Naive thymus-derived CD4-positive, alpha-beta T cell (primary cell): ENCODE measurements at regions of chr6 and their contacts with region 1.

Region 1: GRCh38 chr6:132669690-132670291 is 10.8 kb upstream of the TAAR1 start:
- DNase-seq: peak in 6 of 9 donors; percentile 4 to 41 (median 32)
- ATAC-seq: peak; percentile 79
- H3K4me3 ChIP-seq: no peak overlapping the region
- H3K4me3 Mint-ChIP-seq: no peak overlapping the region
- H3K27ac ChIP-seq: no peak overlapping the region
- H3K27ac Mint-ChIP-seq: no peak overlapping the region
- H3K4me1 ChIP-seq: no peaks in the 10 kb centered on the region
- H3K4me1 Mint-ChIP-seq: peaks cover 0 to 6% (median 4%) of the 10 kb centered on the region in 7 donors
- H3K27me3 ChIP-seq: no peaks in the 10 kb centered on the region
- H3K27me3 Mint-ChIP-seq: peaks cover 3 to 17% (median 9%) of the 10 kb centered on the region in 5 donors

Region 2: GRCh38 chr6:132643547-132643946 is 26.2 kb before region 1 on chr6:
- CTCF ChIA-PET with region 1: no interaction called
- POLR2A ChIA-PET with region 1: no interaction called
- intact Hi-C with region 1: no loop called
- DNase-seq: no peak
- ATAC-seq: no peak
- H3K4me3 ChIP-seq: no peak overlapping the region
- H3K4me3 Mint-ChIP-seq: no peak overlapping the region
- H3K27ac ChIP-seq: no peak overlapping the region
- H3K27ac Mint-ChIP-seq: no peak overlapping the region
- H3K4me1 ChIP-seq: peaks cover 0 to 4% of the 10 kb centered on the region in 2 donors
- H3K4me1 Mint-ChIP-seq: peaks cover 0 to 4% (median 0%) of the 10 kb centered on the region in 7 donors
- H3K27me3 ChIP-seq: no peaks in the 10 kb centered on the region
- H3K27me3 Mint-ChIP-seq: peaks cover 0 to 31% (median 10%) of the 10 kb centered on the region in 5 donors

Region 3: GRCh38 chr6:132780770-132781371 is 111.1 kb after region 1 on chr6:
- CTCF ChIA-PET with region 1: interaction called, 4 read pairs
- POLR2A ChIA-PET with region 1: interaction called, 4 read pairs
- intact Hi-C with region 1: loop called (anchors 1 kb)
- DNase-seq: no peak
- ATAC-seq: no peak
- H3K4me3 ChIP-seq: no peak overlapping the region
- H3K4me3 Mint-ChIP-seq: no peak overlapping the region
- H3K27ac ChIP-seq: no peak overlapping the region
- H3K27ac Mint-ChIP-seq: no peak overlapping the region
- H3K4me1 ChIP-seq: no peaks in the 10 kb centered on the region
- H3K4me1 Mint-ChIP-seq: no peaks in the 10 kb centered on the region
- H3K27me3 ChIP-seq: no peaks in the 10 kb centered on the region
- H3K27me3 Mint-ChIP-seq: no peaks in the 10 kb centered on the region

Region 4: DNA sequence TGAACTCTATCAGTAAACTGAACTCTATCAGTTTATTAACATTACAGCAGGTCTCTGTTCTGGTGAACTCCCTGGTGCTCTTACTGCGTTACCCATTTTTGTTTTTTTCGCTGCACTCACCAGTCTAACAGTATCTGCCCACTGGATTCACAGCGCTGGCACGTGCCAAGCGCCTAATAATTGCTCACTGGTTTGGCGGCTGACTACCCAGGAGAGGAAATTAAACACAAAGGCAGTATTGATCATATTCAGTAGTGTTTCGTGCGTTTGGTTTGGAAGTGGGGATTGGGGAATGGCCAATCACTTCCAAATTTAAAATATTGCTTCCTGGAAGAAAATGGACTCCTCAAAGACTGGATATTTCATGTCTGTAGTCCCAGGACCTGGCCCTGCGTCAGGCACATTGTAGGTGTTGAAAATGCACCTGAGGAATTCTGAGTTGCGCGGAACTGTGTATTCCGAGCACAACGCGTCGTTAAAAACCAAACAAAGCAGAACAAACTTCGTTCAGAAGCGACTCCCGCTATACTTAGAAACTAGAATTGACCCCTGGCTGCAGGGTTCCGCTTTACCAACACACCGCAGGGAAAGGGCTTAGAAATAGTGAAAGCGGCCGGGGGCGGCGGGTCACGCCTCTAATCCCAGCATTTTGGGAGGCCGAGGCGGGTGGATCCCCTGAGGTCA is 143.5 kb after region 1 on chr6:
- CTCF ChIA-PET with region 1: interaction called, 3 read pairs
- POLR2A ChIA-PET with region 1: interaction called, 3 read pairs
- intact Hi-C with region 1: loop called in 1 of 2 experiments (anchors 5 kb)
- DNase-seq: peak in 8 of 9 donors; percentile 31 to 71 (median 62)
- ATAC-seq: no peak
- H3K4me3 ChIP-seq: peak overlapping the region; percentile 90
- H3K4me3 Mint-ChIP-seq: peak overlapping the region; percentile 91 to 100 (median 98)
- H3K27ac ChIP-seq: peak overlapping the region; percentile 80
- H3K27ac Mint-ChIP-seq: peak overlapping the region; percentile 95 to 100 (median 98)
- H3K4me1 ChIP-seq: peaks cover 23 to 26% of the 10 kb centered on the region in 2 donors
- H3K4me1 Mint-ChIP-seq: peaks cover 29 to 54% (median 43%) of the 10 kb centered on the region in 7 donors
- H3K27me3 ChIP-seq: no peaks in the 10 kb centered on the region
- H3K27me3 Mint-ChIP-seq: peaks cover 0 to 30% (median 0%) of the 10 kb centered on the region in 5 donors

Region 5: GRCh38 chr6:132962936-132963868 is 293.4 kb after region 1 on chr6:
- CTCF ChIA-PET with region 1: no interaction called
- POLR2A ChIA-PET with region 1: no interaction called
- intact Hi-C with region 1: loop called (anchors 1 to 5 kb)
- DNase-seq: peak in 7 of 9 donors; percentile 6 to 64 (median 20)
- ATAC-seq: peak; percentile 65
- H3K4me3 ChIP-seq: no peak overlapping the region
- H3K4me3 Mint-ChIP-seq: no peak overlapping the region
- H3K27ac ChIP-seq: no peak overlapping the region
- H3K27ac Mint-ChIP-seq: no peak overlapping the region
- H3K4me1 ChIP-seq: no peaks in the 10 kb centered on the region
- H3K4me1 Mint-ChIP-seq: peaks cover 0 to 29% (median 0%) of the 10 kb centered on the region in 7 donors
- H3K27me3 ChIP-seq: no peaks in the 10 kb centered on the region
- H3K27me3 Mint-ChIP-seq: peaks cover 20 to 49% (median 36%) of the 10 kb centered on the region in 5 donors

Region 6: GRCh38 chr6:133227344-133227743 is 557.6 kb after region 1 on chr6:
- CTCF ChIA-PET with region 1: no interaction called
- POLR2A ChIA-PET with region 1: no interaction called
- intact Hi-C with region 1: no loop called
- DNase-seq: no peak
- ATAC-seq: no peak
- H3K4me3 ChIP-seq: no peak overlapping the region
- H3K4me3 Mint-ChIP-seq: no peak overlapping the region
- H3K27ac ChIP-seq: no peak overlapping the region
- H3K27ac Mint-ChIP-seq: no peak overlapping the region
- H3K4me1 ChIP-seq: no peaks in the 10 kb centered on the region
- H3K4me1 Mint-ChIP-seq: no peaks in the 10 kb centered on the region
- H3K27me3 ChIP-seq: no peaks in the 10 kb centered on the region
- H3K27me3 Mint-ChIP-seq: peaks cover 0 to 11% (median 0%) of the 10 kb centered on the region in 5 donors